GM13977 (cell line): ENCODE measurements at regions of chr3 and their contacts with region 1.

Region 1: DNA sequence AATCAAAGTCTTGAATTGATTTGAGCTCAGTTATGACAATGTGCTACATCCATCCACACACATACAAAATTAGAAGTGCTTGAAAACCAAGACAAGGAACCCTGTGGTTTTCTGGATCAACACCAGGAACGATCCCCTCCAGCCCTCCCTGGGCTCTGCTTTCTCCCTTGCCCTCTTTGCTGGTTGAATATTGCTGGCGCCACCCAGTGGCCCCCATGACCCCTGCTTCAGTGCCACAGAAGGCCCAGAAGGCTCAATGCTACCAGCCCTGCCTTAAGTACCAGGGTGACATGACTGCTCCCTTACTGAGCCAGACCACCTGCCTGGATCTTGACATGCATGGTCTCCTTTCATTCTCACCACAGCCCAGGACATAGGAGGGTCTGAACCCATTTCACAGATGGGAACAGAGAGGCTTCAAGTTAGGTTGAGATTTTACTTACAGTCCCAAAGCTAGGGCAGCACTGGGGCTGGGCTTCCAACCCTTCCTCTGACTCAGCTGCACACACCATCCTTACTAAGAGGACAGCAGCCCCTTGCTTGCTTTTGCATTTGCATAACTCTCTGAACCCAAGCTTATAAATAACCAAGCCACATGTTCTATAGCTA is 15.0 kb downstream of the IL12A start:
- DNase-seq: peak; percentile 48
- CTCF ChIP-seq: peak; percentile 90

Region 2: DNA sequence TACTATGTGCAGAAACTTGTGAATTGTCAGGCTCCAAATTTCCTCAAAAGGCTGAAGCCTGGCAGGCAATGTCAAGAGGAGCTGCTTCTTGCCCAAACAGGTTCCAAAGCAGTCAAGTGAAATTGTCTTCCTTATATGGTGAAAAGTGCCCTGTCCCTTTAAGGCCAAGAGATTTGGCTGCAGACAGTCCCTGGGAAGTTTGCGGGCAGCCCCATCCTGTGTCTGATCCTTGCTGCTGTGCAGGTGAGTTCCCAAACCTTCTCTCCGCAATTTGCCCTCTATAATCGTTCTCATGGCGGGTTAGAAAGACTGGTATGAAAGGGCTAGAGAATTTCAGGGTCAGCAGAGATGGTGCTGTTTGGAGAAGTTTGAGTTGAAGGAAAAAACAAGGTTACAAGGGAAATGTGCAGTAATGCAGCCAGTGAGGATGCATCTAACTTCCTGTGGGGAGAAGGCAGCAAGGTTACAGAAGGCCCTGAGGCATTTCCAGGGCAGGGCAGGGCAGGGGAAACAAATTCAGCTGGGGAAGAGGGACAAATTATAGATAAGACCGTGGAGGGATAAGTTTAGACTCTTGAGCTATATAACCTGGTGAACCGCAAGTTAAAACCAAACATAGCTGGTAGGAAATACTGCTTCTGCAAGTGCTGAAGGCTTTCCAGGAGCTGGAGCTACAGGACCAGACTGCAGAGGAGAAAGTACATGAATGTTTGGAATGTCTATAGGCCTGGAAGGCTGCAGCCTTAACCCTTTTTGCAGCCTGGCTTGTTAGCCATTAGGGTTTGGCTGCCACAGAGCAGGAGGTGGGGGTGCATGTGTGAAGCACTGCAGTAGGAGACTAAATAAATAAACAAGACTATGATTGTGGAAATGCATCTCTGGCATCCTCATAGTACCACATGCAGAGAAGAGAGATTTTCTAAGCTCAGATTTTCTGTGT is 271.2 kb before region 1 on chr3:
- in situ Hi-C with region 1: no loop called
- DNase-seq: no peak
- CTCF ChIP-seq: no peak

Region 3: GRCh38 chr3:159884661-159885402 is 118.8 kb before region 1 on chr3:
- in situ Hi-C with region 1: loop called (anchors 5 kb)
- DNase-seq: peak; percentile 51
- CTCF ChIP-seq: peak; percentile 55